Endothelial cell of umbilical vein (primary cell): ENCODE measurements at regions of chr14 and their contacts with region 1.

Region 1: DNA sequence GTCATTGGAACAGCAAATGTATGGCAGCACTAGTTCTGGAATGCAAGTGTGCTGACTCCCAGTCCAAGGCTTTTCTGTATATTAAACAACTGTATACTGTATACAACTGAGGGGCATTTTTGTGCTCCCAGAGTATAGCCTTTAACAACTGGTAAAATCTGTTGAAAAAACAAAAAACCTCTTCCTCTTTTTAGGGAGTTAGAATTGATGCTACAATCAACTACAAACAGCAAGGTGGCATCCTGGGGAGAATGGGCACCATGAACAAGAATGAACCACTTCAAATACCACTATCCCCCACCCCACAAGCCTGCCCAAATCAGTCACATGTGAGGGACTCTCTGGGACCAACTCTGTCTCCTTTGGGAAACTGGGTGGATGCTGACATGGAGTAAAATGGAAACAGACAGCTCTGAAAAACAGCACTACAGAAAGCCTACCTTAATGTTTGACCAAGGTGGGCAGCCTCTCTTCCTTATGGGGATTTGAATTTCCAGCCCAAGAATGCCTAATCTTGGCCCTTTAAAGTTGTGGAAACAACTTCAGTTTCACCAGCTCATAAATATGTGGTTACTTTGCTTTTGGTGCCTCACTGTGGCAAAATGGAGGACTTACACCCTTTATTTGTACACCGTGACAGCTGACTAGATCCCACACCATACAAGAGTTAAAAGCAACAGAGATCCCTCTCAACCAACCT is 7.5 kb downstream of the VTI1B start:
- DNase-seq: peak; percentile 78
- H3K4me3 ChIP-seq: no peak overlapping the region
- H3K27ac ChIP-seq: no peak overlapping the region
- H3K4me1 ChIP-seq: no peaks in the 10 kb centered on the region
- H3K27me3 ChIP-seq: no peaks in the 10 kb centered on the region
- CTCF ChIP-seq: peak; percentile 39 to 50
- POLR2A ChIP-seq: no peak

Region 2: DNA sequence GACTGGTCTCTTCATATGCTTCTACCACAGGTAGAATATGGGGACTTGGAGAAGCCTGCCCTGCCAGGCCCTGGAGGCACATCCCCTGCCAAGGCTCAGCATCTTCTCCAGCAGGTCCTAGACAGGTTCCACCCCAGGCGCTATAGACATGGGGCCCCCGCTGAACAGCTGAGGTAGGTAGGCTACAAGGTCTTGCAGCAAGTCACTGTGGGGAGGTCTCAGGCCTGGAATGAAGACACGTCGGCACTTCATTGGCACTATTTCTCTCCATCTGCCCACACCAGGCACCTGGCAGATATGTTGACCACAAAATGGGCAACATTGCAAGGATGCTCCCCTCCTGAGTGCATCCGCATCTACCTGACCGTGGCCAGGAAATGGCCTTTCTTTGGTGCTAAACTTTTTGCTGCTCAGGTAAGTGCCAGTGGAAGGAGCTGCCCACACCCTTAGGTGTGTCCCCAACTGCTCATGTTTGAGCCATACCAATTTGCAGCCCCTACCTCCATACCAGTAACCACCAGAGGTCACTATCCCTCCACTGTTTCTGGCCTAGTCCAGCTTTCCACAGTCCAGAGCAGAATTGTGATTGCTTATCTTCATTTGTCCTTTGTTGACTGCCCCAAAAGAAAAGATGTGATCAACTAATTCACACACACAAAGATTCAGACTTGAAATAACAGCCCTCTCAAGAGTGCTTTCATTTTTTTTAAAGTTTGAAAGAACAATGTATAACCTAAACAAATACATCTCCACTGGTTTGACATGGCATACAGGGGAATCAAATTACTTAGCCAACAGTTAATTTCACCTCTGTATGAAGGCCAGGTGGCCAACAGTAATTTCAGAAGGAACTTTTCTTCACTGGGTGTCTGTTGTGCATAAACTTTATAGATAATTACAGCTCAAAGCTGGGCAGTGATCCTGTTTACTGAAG is 82.9 kb before region 1 on chr14:
- CTCF ChIA-PET with region 1: interaction called, 97 read pairs
- POLR2A ChIA-PET with region 1: no interaction called
- dilution Hi-C with region 1: no loop called
- intact Hi-C with region 1: loop called (anchors 1 kb)
- DNase-seq: peak; percentile 53
- H3K4me3 ChIP-seq: no peak overlapping the region
- H3K27ac ChIP-seq: no peak overlapping the region
- H3K4me1 ChIP-seq: no peaks in the 10 kb centered on the region
- H3K27me3 ChIP-seq: peaks cover 0 to 2% of the 10 kb centered on the region in 2 experiments
- CTCF ChIP-seq: peak; percentile 56 to 76
- POLR2A ChIP-seq: no peak

Region 3: GRCh38 chr14:67610491-67610890 is 56.4 kb before region 1 on chr14:
- CTCF ChIA-PET with region 1: interaction called, 60 read pairs
- POLR2A ChIA-PET with region 1: no interaction called
- dilution Hi-C with region 1: no loop called
- intact Hi-C with region 1: no loop called
- DNase-seq: no peak
- H3K4me3 ChIP-seq: no peak overlapping the region
- H3K27ac ChIP-seq: no peak overlapping the region
- H3K4me1 ChIP-seq: no peaks in the 10 kb centered on the region
- H3K27me3 ChIP-seq: peaks cover 8 to 19% of the 10 kb centered on the region in 2 experiments
- CTCF ChIP-seq: no peak
- POLR2A ChIP-seq: no peak

Region 4: DNA sequence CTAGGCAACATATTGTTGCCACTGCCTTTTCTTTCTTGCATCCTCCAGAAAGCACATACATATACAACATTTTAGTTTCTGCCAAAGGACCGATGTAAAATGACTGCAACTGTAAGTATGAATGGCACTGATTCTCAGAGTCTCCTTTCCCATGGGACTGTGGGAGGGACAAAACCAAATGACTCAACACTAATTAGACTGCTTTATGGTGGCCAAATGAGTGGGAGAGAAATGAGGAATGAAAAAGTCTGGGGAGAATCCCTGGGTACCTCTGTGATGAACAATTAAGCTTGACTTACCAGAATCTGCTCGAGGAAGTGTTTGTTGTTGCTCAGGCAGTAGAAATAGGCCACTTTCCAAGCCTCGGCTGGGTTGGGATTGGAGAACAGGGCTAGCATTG is 139.3 kb after region 1 on chr14:
- CTCF ChIA-PET with region 1: no interaction called
- POLR2A ChIA-PET with region 1: no interaction called
- dilution Hi-C with region 1: no loop called
- intact Hi-C with region 1: no loop called
- DNase-seq: no peak
- H3K4me3 ChIP-seq: no peak overlapping the region
- H3K27ac ChIP-seq: no peak overlapping the region
- H3K4me1 ChIP-seq: no peaks in the 10 kb centered on the region
- H3K27me3 ChIP-seq: no peaks in the 10 kb centered on the region
- CTCF ChIP-seq: no peak
- POLR2A ChIP-seq: no peak